Posterior vena cava (tissue), 2 donors: ENCODE measurements at regions of chr2 and their contacts with region 1.

Region 1: GRCh38 chr2:141455184-141455826 is 675.5 kb downstream of the LRP1B start:
- DNase-seq: no peak

Region 2: GRCh38 chr2:141079231-141079630 is 376.1 kb before region 1 on chr2:
- intact Hi-C with region 1: no loop called
- DNase-seq: no peak

Region 3: GRCh38 chr2:141439527-141439926 is 15.8 kb before region 1 on chr2:
- intact Hi-C with region 1: loop called in 1 of 2 experiments (anchors 2 kb)
- DNase-seq: no peak